CD4-positive, alpha-beta T cell (primary cell): ENCODE measurements at regions of chr14 and their contacts with region 1.

Region 1: DNA sequence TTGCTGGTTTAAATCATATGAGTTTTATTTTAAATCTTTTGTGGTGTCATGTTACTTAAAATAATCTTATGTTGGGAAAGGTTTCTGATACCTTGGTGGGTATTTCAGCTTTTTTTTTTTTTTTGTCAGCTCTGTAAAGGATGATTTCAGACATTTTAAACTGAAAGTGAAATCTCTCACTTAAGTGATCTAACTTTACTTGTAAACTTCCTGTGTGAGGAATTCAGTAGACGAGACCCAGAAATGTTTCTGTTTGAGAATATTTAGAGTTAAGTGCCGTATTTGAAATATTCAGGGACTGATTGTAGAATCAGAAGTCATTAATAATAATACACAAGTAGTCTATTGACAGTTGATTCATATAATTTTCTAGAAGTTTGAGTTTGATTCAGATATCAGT is 37.8 kb downstream of the PROX2 start:
- DNase-seq: peak in 3 of 14 experiments; percentile 57 to 79 (median 59)
- ATAC-seq: peak; percentile 76
- H3K4me3 ChIP-seq: peak overlapping the region; percentile 8
- H3K4me3 Mint-ChIP-seq: peak overlapping the region; percentile 86
- H3K27ac ChIP-seq: peak overlapping the region; percentile 67 to 88
- H3K27ac Mint-ChIP-seq: peak overlapping the region; percentile 97
- H3K4me1 ChIP-seq: peaks cover 30% of the 10 kb centered on the region
- H3K4me1 Mint-ChIP-seq: peaks cover 87% of the 10 kb centered on the region
- H3K27me3 ChIP-seq: no peaks in the 10 kb centered on the region
- H3K27me3 Mint-ChIP-seq: no peaks in the 10 kb centered on the region
- CTCF ChIP-seq: no peak

Region 2: DNA sequence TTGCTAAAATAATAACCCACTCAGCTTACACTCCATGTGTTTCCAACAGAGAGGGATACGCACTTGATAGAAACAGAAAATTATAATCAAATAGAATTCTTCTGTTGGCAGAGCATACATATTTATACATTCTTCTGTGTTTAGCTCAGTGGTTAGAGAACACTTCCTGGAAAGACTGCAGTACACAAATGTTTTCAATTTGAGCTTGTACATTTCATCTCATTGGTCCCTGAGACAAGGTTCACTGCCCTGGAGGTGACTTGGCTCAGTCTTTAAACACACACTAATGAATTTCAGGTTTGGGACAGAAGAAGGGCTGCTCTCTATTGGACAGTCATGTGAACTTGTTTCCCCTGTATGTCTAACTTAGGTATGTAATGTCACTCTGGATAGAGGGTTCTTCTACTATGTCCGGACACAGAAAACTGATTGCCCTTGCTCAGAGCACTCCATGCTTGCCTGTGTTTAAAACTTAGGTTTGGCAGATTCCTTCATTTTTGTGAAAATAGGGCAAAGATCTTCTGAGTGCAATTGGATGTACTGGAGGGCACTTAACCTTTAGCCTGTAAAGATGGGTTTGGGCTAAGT is 14.9 kb after region 1 on chr14:
- CTCF ChIA-PET with region 1: interaction called, 4 read pairs
- POLR2A ChIA-PET with region 1: interaction called, 26 read pairs
- intact Hi-C with region 1: no loop called
- DNase-seq: no peak
- ATAC-seq: no peak
- H3K4me3 ChIP-seq: no peak overlapping the region
- H3K4me3 Mint-ChIP-seq: no peak overlapping the region
- H3K27ac ChIP-seq: no peak overlapping the region
- H3K27ac Mint-ChIP-seq: no peak overlapping the region
- H3K4me1 ChIP-seq: peaks cover 9% of the 10 kb centered on the region
- H3K4me1 Mint-ChIP-seq: peaks cover 29% of the 10 kb centered on the region
- H3K27me3 ChIP-seq: no peaks in the 10 kb centered on the region
- H3K27me3 Mint-ChIP-seq: no peaks in the 10 kb centered on the region
- CTCF ChIP-seq: no peak